Ovary (tissue), 10 donors: ENCODE measurements at regions of chr9 and their contacts with region 1.

Region 1: DNA sequence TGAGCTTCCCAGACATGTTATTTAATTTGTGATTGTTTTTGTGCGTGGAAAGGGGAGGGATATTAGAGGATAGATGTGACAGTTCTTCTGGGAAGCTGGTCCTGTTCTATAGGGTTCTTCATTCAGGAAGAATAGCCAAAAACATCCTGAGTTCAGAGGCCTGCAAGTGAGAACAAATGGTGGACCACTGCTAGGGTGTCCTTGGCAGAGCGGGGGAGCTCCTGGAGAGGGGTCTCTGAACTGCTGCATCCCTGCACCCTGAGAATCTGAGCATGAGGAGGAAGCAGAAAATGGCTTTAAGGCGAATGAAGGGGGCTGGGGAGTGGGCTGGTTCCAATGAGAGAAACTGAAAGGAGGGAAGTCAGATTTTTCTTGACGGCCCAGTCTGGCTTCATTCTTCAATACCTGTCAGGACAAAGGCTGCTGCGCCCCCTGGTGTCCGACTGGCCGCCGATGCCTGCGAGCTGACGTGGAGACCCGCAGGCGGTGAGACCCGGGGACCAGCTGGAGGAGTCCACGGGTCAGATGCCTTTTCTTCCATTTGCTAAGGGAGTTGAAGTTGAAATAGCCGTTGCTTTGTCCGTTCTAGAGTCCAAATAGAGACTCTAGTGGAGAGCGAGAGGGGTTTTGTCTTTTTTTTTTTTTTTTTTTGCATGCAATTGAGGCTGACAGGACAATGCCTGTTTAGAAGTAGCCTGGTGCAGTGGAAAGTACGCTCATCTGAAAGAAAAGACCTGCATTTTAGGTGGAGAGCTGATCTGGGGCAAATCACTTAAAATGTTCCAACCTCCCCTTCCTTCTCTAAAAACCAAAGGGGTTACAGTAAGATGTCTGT is 39.5 kb upstream of the NFIB start:
- DNase-seq: peak; percentile 92 to 96 (median 95)
- H3K4me3 ChIP-seq: no peak overlapping the region
- H3K27ac ChIP-seq: no peak overlapping the region
- H3K4me1 ChIP-seq: peaks cover 2% of the 10 kb centered on the region
- H3K27me3 ChIP-seq: no peaks in the 10 kb centered on the region
- CTCF ChIP-seq: peak; percentile 79 to 86 (median 83)
- EP300 ChIP-seq: no peak
- POLR2A ChIP-seq: no peak

Region 2: DNA sequence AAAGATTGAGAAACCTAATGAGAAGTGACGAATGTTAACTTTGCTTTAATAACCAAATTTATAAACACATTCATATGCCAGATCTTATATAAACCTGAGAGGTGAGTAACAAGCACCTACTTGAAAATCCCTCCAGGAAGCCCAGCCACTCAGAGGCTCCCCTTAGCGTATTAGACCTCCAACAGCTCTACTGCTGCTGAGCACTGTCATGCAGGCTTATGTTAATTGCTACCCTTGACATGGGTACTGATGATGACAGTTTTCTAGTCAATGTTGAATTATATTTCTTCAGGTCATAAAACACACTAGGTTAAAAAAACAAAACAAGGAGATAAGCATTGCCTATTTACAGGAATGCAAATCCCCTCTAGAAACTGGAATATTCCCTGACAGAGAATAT is 1235.1 kb before region 1 on chr9:
- intact Hi-C with region 1: no loop called
- DNase-seq: no peak
- H3K4me3 ChIP-seq: no peak overlapping the region
- H3K27ac ChIP-seq: no peak overlapping the region
- H3K4me1 ChIP-seq: no peaks in the 10 kb centered on the region
- H3K27me3 ChIP-seq: no peaks in the 10 kb centered on the region
- CTCF ChIP-seq: no peak
- EP300 ChIP-seq: no peak
- POLR2A ChIP-seq: no peak

Region 3: GRCh38 chr9:13351778-13352386 is 1001.6 kb before region 1 on chr9:
- intact Hi-C with region 1: loop called in 1 of 4 experiments (anchors 10 kb)
- DNase-seq: no peak
- H3K4me3 ChIP-seq: no peak overlapping the region
- H3K27ac ChIP-seq: no peak overlapping the region
- H3K4me1 ChIP-seq: no peaks in the 10 kb centered on the region
- H3K27me3 ChIP-seq: no peaks in the 10 kb centered on the region
- CTCF ChIP-seq: peak; percentile 39 to 74 (median 43)
- EP300 ChIP-seq: no peak
- POLR2A ChIP-seq: no peak

Region 4: DNA sequence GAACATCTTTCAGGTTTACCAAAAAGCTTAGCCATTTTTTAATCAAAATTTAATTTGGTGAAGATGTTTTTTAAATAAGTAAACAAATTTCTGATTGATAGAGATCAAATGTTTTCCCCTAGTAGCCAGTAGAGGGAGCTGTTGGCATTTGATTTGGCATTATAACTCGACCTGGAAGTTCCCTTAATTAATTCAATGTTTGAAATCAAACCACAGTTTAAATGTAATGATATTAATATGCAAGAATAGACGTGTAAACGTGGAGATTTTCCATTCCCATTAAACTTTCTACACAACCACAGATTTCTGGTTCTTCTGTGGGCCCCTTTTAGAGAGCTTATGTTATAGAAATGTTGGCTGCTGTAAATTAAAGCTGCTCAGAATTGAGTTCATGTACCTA is 925.9 kb before region 1 on chr9:
- intact Hi-C with region 1: loop called in 2 of 4 experiments (anchors 5 to 10 kb)
- DNase-seq: no peak
- H3K4me3 ChIP-seq: no peak overlapping the region
- H3K27ac ChIP-seq: no peak overlapping the region
- H3K4me1 ChIP-seq: no peaks in the 10 kb centered on the region
- H3K27me3 ChIP-seq: no peaks in the 10 kb centered on the region
- CTCF ChIP-seq: peak; percentile 60 to 81 (median 71)
- EP300 ChIP-seq: no peak
- POLR2A ChIP-seq: no peak

Region 5: GRCh38 chr9:13446938-13447842 is 906.2 kb before region 1 on chr9:
- intact Hi-C with region 1: loop called in 3 of 4 experiments (anchors 5 to 10 kb)
- DNase-seq: no peak
- H3K4me3 ChIP-seq: no peak overlapping the region
- H3K27ac ChIP-seq: no peak overlapping the region
- H3K4me1 ChIP-seq: no peaks in the 10 kb centered on the region
- H3K27me3 ChIP-seq: no peaks in the 10 kb centered on the region
- CTCF ChIP-seq: peak in 2 of 3 donors; percentile 15 to 36
- EP300 ChIP-seq: no peak
- POLR2A ChIP-seq: no peak

Region 6: GRCh38 chr9:14170973-14171596 is 182.4 kb before region 1 on chr9:
- intact Hi-C with region 1: no loop called
- DNase-seq: no peak
- H3K4me3 ChIP-seq: no peak overlapping the region
- H3K27ac ChIP-seq: no peak overlapping the region
- H3K4me1 ChIP-seq: no peaks in the 10 kb centered on the region
- H3K27me3 ChIP-seq: no peaks in the 10 kb centered on the region
- CTCF ChIP-seq: no peak
- EP300 ChIP-seq: no peak
- POLR2A ChIP-seq: no peak